Body of pancreas (tissue), 4 donors: ENCODE measurements at regions of chr15 and their contacts with region 1.

Region 1: GRCh38 chr15:57340682-57341259 is 35.5 kb upstream of the CGNL1 start:
- DNase-seq: peak; percentile 55 to 61 (median 58)
- ATAC-seq: peak; percentile 79
- H3K4me3 ChIP-seq: no peak overlapping the region
- H3K27ac ChIP-seq: no peak overlapping the region
- H3K4me1 ChIP-seq: peaks cover 14% of the 10 kb centered on the region
- H3K27me3 ChIP-seq: no peaks in the 10 kb centered on the region
- CTCF ChIP-seq: peak; percentile 72 to 94 (median 88)
- POLR2A ChIP-seq: no peak

Region 2: GRCh38 chr15:57406062-57406772 is 65.4 kb after region 1 on chr15:
- intact Hi-C with region 1: no loop called
- DNase-seq: no peak
- ATAC-seq: no peak
- H3K4me3 ChIP-seq: no peak overlapping the region
- H3K27ac ChIP-seq: no peak overlapping the region
- H3K4me1 ChIP-seq: peaks cover 6% of the 10 kb centered on the region
- H3K27me3 ChIP-seq: no peaks in the 10 kb centered on the region
- CTCF ChIP-seq: no peak
- POLR2A ChIP-seq: no peak

Region 3: DNA sequence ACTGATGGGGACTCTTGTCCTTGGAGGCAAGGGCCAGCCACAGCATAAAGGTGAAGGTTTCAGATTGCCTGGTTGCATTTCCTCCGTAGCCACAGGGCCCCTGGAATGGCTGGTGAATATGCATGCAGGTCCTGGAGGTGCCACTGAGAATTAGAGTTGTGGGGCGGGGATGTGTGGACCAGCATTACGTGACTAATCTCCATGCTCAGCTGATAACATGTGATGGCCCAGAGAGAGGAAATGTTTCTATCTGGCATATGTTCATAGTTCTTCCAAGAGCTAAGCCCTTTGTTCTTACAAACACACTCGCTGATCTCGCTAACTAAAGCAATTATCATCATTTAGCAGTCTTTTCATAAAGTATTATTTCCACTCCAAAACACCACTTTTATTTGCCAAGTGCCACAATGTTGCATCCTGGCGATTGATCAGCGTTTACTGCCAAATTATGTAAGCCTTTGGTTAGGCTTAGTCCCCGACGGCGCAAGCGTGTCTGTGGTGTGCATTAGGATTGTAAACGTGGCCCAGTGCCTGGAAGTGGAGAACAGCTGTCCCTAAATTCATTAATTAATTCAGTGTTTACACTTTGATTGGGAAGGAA is 91.5 kb after region 1 on chr15:
- intact Hi-C with region 1: loop called (anchors 10 kb)
- DNase-seq: peak in 2 of 4 donors; percentile 26 to 58
- ATAC-seq: peak; percentile 51
- H3K4me3 ChIP-seq: no peak overlapping the region
- H3K27ac ChIP-seq: no peak overlapping the region
- H3K4me1 ChIP-seq: peaks cover 11% of the 10 kb centered on the region
- H3K27me3 ChIP-seq: no peaks in the 10 kb centered on the region
- CTCF ChIP-seq: no peak
- POLR2A ChIP-seq: no peak

Region 4: DNA sequence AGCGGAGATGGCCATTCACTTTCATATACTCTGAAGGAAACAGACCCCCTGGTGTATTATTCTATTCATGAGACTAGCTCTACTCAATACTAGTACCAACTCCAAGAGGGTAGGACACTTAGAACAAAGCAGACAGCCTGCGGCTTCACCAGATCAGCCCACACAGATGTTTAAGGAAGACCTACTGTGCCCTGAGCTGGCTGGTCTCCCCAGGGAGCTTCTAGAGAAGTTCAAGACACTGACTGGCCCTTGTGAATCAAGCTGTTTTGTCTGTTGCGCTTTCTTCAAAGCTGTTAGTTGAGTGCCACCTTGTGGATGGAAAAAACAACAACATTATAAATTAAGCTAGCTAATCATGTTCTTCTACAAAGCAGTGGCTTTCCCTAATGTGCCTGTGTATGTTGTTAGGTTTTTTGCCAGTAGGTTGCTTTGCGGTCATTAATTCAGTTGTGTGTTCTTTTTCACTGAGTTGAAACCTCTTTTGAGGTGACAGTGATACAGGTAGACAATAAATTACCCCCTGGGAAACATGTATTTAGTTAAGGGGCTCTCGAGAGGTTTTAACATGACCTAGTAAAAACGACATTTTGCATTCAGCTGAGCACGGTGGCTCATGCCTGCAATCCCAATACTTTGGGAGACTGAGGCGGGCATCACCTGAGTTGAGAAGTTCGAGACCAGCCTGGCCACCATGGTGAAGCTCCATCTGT is 186.8 kb after region 1 on chr15:
- intact Hi-C with region 1: loop called (anchors 5 kb)
- DNase-seq: peak in 3 of 4 donors; percentile 46 to 64 (median 52)
- ATAC-seq: peak; percentile 82
- H3K4me3 ChIP-seq: no peak overlapping the region
- H3K27ac ChIP-seq: peak overlapping the region in 2 of 4 donors; percentile 3 to 44
- H3K4me1 ChIP-seq: peaks cover 40% of the 10 kb centered on the region
- H3K27me3 ChIP-seq: no peaks in the 10 kb centered on the region
- CTCF ChIP-seq: peak; percentile 41 to 88 (median 75)
- POLR2A ChIP-seq: no peak